Activated B cell treated with CpG ODN at 0.5 μM for 24 hours (primary cell): ENCODE measurements at regions of chr3 and their contacts with region 1.

Region 1: GRCh38 chr3:30693470-30694120 is 87.2 kb downstream of the TGFBR2 start:
- DNase-seq: no peak
- ATAC-seq: peak; percentile 91
- H3K4me3 Mint-ChIP-seq: no peak overlapping the region
- H3K27ac Mint-ChIP-seq: peak overlapping the region; percentile 76
- H3K4me1 Mint-ChIP-seq: peaks cover 67% of the 10 kb centered on the region
- H3K27me3 Mint-ChIP-seq: no peaks in the 10 kb centered on the region
- CTCF ChIP-seq: no peak

Region 2: GRCh38 chr3:30012941-30013543 is 680.6 kb before region 1 on chr3:
- CTCF ChIA-PET with region 1: interaction called, 4 read pairs
- POLR2A ChIA-PET with region 1: no interaction called
- intact Hi-C with region 1: loop called (anchors 10 kb)
- DNase-seq: no peak
- ATAC-seq: no peak
- H3K4me3 Mint-ChIP-seq: no peak overlapping the region
- H3K27ac Mint-ChIP-seq: no peak overlapping the region
- H3K4me1 Mint-ChIP-seq: no peaks in the 10 kb centered on the region
- H3K27me3 Mint-ChIP-seq: peaks cover 2% of the 10 kb centered on the region
- CTCF ChIP-seq: no peak

Region 3: GRCh38 chr3:30112902-30113484 is 580.6 kb before region 1 on chr3:
- CTCF ChIA-PET with region 1: interaction called, 45 read pairs
- POLR2A ChIA-PET with region 1: interaction called, 3 read pairs
- intact Hi-C with region 1: loop called (anchors 1 kb)
- DNase-seq: no peak
- ATAC-seq: no peak
- H3K4me3 Mint-ChIP-seq: no peak overlapping the region
- H3K27ac Mint-ChIP-seq: no peak overlapping the region
- H3K4me1 Mint-ChIP-seq: peaks cover 10% of the 10 kb centered on the region
- H3K27me3 Mint-ChIP-seq: no peaks in the 10 kb centered on the region
- CTCF ChIP-seq: no peak

Region 4: DNA sequence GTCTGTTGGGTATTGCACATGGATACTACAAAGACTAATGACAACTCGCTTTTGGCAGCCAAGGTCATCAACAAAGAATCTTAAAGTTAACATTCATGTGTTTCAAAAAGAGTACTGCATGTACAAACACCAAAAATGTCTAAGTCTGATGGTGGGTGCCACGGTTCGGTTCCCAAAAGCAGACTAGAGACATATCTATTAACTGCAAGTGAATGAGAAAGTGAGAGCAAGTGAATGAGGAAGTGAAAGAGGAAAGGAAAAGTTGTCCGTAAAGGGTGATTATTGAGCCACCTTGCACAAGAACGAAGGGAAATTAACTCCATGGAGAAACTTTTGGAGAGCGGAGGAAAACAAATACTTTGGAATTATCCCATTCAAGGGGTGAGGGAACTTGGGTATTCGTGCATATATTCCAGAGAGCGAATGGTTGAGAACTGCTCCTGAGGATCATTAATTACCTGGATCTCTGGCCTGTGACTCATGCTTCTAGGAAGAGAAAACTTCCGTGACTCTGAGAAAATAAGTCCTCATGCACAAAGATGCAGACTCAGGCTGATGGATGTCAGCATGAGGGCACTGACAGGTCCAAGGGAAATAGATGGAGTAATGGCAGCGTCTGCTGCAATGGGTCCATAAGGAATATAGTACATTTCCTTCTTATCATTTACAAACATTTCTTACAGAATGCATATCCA is 423.7 kb before region 1 on chr3:
- CTCF ChIA-PET with region 1: interaction called, 5 read pairs
- POLR2A ChIA-PET with region 1: no interaction called
- intact Hi-C with region 1: loop called (anchors 2 kb)
- DNase-seq: no peak
- ATAC-seq: peak; percentile 97
- H3K4me3 Mint-ChIP-seq: peak overlapping the region; percentile 58
- H3K27ac Mint-ChIP-seq: peak overlapping the region; percentile 2
- H3K4me1 Mint-ChIP-seq: peaks cover 18% of the 10 kb centered on the region
- H3K27me3 Mint-ChIP-seq: no peaks in the 10 kb centered on the region
- CTCF ChIP-seq: no peak

Region 5: GRCh38 chr3:30437171-30437601 is 256.4 kb before region 1 on chr3:
- CTCF ChIA-PET with region 1: interaction called, 4 read pairs
- POLR2A ChIA-PET with region 1: no interaction called
- intact Hi-C with region 1: loop called (anchors 1 kb)
- DNase-seq: no peak
- ATAC-seq: no peak
- H3K4me3 Mint-ChIP-seq: no peak overlapping the region
- H3K27ac Mint-ChIP-seq: no peak overlapping the region
- H3K4me1 Mint-ChIP-seq: peaks cover 43% of the 10 kb centered on the region
- H3K27me3 Mint-ChIP-seq: no peaks in the 10 kb centered on the region
- CTCF ChIP-seq: no peak

Region 6: GRCh38 chr3:30502742-30503073 is 190.9 kb before region 1 on chr3:
- CTCF ChIA-PET with region 1: no interaction called
- POLR2A ChIA-PET with region 1: interaction called, 10 read pairs
- intact Hi-C with region 1: loop called (anchors 5 kb)
- DNase-seq: no peak
- ATAC-seq: peak; percentile 66
- H3K4me3 Mint-ChIP-seq: peak overlapping the region; percentile 74
- H3K27ac Mint-ChIP-seq: peak overlapping the region; percentile 95
- H3K4me1 Mint-ChIP-seq: peaks cover 64% of the 10 kb centered on the region
- H3K27me3 Mint-ChIP-seq: no peaks in the 10 kb centered on the region
- CTCF ChIP-seq: no peak

Region 7: GRCh38 chr3:30751610-30752299 is 58.2 kb after region 1 on chr3:
- CTCF ChIA-PET with region 1: interaction called, 3 read pairs
- POLR2A ChIA-PET with region 1: no interaction called
- intact Hi-C with region 1: loop called (anchors 5 kb)
- DNase-seq: peak; percentile 20
- ATAC-seq: peak; percentile 72
- H3K4me3 Mint-ChIP-seq: no peak overlapping the region
- H3K27ac Mint-ChIP-seq: no peak overlapping the region
- H3K4me1 Mint-ChIP-seq: peaks cover 9% of the 10 kb centered on the region
- H3K27me3 Mint-ChIP-seq: peaks cover 7% of the 10 kb centered on the region
- CTCF ChIP-seq: no peak